Activated CD4-positive, alpha-beta T cell treated with anti-CD3 and anti-CD28 coated beads, Interleukin-2, amount 10 ng/mL, durations not matched to agents 24 days and 14 days (primary cell): ENCODE measurements at regions of chr1 and their contacts with region 1.

Region 1: DNA sequence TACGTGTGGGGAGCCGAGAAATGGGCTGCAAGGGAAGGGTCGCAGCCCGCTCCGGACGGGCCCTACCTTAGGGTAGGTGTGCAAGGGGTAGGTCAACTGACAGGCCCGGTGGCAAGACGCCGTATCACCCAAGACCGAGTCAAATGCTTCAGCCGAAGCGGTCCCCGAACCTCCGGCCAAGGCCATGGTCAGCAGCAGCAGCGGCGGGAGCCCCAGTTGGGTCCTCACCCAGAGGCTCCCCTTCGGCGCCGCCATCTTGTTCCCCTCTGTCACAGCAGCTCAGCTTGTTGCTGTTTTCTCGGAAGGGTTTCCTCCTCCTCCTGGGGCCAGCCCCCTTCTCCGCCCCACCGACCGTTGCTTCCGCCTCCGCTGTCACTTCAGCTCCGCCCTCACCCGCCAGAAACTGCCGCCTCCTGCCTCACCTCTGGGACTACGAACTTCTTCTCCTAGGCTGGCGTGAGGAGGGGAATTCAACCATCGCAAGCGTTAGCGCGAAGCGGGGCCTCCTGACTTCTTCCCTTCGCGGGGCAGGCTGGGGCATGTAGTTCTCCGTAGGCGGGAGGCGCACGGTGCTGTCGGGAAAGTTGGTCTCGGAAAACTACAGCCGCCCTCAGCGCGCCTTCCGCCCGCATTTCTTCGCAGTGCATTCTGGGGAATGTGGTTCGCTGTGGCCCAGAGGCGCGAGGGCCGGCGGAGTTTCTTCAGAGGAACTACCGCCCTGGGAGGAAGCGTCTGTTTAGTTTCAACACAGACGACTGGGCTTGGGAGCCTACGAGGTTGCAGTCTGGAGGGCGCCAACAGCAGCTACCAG is at the starts of genes TCEANC2 and TMEM59:
- DNase-seq: peak; percentile 99
- H3K4me3 Mint-ChIP-seq: no peak within 1 kb of the TSS
- H3K27ac Mint-ChIP-seq: no peak within 1 kb of the TSS
- H3K4me1 Mint-ChIP-seq: peaks cover 28% of the 10 kb centered on the region
- H3K27me3 Mint-ChIP-seq: no peaks in the 10 kb centered on the region
- total RNA-seq, gene TCEANC2: 10.0 and 11.6 TPM in 2 replicates
- total RNA-seq, gene TMEM59: 99.3 and 127 TPM in 2 replicates

Region 2: DNA sequence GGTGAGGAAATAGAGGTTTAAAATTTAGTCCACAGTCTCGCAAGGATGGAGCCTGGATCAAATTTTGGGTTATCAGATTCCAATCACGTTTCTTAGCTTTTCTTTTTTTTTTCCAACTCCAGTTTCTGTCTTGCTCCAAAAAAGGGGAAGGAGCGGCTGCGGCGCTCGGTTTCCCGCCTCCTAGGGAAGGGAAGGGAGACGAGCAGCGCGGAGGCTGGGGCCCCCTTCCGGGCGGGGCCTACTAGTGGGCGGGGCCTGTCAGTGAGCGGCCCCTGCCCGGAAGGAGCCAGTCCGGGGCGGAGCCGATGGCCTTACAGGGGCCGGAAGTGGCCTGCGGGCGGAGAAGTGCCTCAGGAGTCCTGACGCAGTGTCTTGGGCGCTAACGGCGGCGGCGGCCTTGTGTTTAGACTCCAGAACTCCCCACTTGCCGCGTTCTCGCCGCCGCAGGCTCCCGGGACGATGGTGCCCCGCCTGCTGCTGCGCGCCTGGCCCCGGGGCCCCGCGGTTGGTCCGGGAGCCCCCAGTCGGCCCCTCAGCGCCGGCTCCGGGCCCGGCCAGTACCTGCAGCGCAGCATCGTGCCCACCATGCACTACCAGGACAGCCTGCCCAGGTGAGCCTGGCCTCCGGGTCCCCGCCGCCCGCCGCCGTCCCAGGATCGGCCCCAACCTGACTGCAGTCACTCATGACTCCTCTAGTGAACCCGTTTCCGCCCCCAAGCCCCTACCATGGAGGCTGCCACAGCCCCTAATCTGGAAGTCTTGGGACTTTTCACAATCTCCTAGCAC is 856.5 kb before region 1 on chr1 and contains the start of gene CPT2:
- intact Hi-C with region 1: loop called (anchors 1 kb)
- DNase-seq: peak; percentile 98
- H3K4me3 Mint-ChIP-seq: peak within 1 kb of the TSS; percentile 88
- H3K27ac Mint-ChIP-seq: peak within 1 kb of the TSS; percentile 96
- H3K4me1 Mint-ChIP-seq: peaks cover 24% of the 10 kb centered on the region
- H3K27me3 Mint-ChIP-seq: no peaks in the 10 kb centered on the region
- total RNA-seq, gene CPT2: 19.5 and 19.9 TPM in 2 replicates

Region 3: DNA sequence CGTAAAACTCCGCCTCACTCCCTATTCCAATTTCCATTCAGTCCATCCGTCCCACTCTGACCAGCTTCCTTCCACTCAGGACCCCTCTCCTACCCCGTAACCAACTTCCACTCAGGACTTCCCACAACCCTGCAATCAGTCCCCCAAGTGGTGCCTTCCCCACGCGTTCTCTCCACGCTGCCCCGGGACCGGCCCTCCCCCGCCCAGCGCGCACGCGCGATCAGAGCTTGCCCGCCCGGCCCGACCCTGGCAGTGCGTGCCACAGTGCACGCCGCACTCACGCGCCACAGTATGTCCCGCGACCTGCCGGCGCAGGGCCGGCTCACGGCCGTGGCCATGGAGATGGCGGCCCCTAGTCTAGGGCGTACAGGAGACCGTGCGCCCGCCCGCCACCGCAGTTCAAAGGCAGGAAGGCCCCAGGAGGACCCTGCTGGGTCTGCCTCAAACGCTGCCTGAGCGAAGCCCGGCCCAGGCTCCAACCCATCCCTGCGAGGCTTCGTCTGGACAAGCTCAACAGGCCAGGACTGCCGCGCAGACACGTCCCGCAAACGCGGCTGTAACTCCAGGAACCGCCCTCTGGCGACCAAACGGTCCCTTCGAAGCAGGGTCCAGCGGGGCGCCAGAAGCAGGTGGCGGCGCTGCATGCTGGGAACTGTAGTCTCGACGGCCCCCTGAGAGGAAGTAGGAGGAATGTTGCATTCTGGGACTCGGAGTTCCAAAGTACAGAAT is 215.1 kb before region 1 on chr1 and contains the start of gene NDC1:
- intact Hi-C with region 1: loop called (anchors 1 kb)
- DNase-seq: peak; percentile 96
- H3K4me3 Mint-ChIP-seq: peak within 1 kb of the TSS; percentile 100
- H3K27ac Mint-ChIP-seq: peak within 1 kb of the TSS; percentile 100
- H3K4me1 Mint-ChIP-seq: peaks cover 25% of the 10 kb centered on the region
- H3K27me3 Mint-ChIP-seq: no peaks in the 10 kb centered on the region
- total RNA-seq, gene NDC1: 39.7 and 40.8 TPM in 2 replicates

Region 4: DNA sequence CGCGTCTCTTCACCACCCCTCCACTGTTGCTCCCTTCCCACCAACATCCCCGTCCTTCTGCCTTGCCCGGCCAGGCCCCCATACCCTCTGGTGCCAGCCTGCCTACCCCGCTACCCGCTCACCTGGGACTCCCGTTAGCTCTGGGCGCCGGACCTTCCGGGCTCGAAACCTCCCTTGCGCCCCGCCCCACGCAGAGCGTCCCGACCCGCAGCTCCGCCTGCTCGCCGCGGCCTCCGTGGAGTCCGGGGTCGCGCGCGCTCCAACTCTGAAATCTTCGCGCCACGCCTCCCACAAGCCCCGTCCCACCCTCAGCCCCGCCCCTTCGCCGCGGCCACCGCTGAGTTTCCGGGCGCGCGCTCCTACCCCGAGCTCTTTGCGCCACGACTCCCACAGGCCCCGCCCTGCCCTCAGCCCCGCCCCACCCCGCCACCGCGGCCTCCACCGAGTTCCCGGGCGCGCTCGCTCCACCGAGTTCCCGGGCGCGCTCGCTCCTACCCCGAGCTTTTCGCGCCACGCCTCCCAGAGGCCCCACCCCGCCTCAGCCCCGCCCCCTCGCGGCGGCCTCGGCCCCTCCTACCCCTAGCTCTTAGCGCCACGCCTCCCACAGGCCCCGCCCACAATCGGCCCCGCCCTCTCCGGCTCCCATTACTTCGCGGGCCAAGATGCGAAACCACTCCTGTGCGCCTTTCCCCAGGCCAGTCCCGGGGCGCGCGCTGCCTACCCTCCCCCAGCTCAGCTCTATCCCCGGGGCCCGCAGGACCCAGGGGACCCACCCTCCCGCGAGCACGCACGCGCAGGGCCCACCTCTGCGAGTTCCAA is 107.5 kb before region 1 on chr1 and contains the start of gene IFT25:
- intact Hi-C with region 1: loop called (anchors 1 kb)
- DNase-seq: peak; percentile 99
- H3K4me3 Mint-ChIP-seq: peak within 1 kb of the TSS; percentile 98
- H3K27ac Mint-ChIP-seq: peak within 1 kb of the TSS; percentile 95
- H3K4me1 Mint-ChIP-seq: peaks cover 53% of the 10 kb centered on the region
- H3K27me3 Mint-ChIP-seq: no peaks in the 10 kb centered on the region
- total RNA-seq, gene IFT25: 53.9 and 55.8 TPM in 2 replicates

Region 5: GRCh38 chr1:54028306-54029251 is 24.6 kb before region 1 on chr1:
- intact Hi-C with region 1: no loop called
- DNase-seq: peak; percentile 46
- H3K4me3 Mint-ChIP-seq: no peak overlapping the region
- H3K27ac Mint-ChIP-seq: no peak overlapping the region
- H3K4me1 Mint-ChIP-seq: no peaks in the 10 kb centered on the region
- H3K27me3 Mint-ChIP-seq: no peaks in the 10 kb centered on the region

Region 6: DNA sequence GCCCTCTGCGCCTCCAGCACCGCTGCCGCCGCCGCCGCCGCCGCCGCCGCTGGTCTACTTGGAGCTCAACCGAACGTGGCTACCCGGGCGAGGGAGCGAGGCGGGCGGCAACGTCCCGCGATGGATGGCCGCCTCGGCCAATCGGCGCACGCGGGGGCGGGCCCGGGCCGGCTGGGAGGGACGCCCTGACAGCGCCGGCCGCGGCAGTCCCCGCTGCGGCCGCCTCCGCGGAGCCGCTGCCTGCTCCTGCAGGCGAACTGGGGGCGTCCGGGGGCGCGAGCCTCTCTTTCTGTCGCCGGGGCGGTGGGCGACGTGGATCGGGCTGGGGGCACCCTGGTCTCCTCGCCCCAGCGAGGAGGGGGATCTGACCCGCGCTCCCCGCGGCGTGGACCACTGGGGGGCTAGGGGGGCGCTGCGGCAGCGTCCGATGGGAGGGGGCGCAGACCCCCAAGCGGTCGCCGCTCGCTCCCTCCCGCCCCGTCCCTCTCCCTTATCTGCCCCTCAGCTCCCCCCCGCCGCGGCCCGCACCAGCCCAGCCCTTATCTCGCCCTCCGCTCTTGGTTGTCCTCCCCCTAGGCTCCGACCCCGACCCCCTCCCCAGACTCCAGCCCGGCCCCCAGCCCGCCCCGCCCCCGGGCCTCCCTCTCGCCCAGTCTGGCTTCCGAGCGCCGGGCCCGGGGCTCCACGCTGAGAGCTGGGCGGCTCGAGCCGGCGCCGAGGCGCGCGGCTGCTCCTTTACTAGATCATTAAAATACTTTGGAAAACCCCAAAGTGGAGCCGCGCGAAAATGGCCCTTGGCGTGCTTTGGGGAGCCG is 353.4 kb after region 1 on chr1 and contains the start of gene SSBP3:
- intact Hi-C with region 1: loop called (anchors 1 kb)
- DNase-seq: peak; percentile 98
- H3K4me3 Mint-ChIP-seq: peak within 1 kb of the TSS; percentile 93
- H3K27ac Mint-ChIP-seq: peak within 1 kb of the TSS; percentile 96
- H3K4me1 Mint-ChIP-seq: peaks cover 64% of the 10 kb centered on the region
- H3K27me3 Mint-ChIP-seq: no peaks in the 10 kb centered on the region
- total RNA-seq, gene SSBP3: 84.1 and 87.9 TPM in 2 replicates

Region 7: DNA sequence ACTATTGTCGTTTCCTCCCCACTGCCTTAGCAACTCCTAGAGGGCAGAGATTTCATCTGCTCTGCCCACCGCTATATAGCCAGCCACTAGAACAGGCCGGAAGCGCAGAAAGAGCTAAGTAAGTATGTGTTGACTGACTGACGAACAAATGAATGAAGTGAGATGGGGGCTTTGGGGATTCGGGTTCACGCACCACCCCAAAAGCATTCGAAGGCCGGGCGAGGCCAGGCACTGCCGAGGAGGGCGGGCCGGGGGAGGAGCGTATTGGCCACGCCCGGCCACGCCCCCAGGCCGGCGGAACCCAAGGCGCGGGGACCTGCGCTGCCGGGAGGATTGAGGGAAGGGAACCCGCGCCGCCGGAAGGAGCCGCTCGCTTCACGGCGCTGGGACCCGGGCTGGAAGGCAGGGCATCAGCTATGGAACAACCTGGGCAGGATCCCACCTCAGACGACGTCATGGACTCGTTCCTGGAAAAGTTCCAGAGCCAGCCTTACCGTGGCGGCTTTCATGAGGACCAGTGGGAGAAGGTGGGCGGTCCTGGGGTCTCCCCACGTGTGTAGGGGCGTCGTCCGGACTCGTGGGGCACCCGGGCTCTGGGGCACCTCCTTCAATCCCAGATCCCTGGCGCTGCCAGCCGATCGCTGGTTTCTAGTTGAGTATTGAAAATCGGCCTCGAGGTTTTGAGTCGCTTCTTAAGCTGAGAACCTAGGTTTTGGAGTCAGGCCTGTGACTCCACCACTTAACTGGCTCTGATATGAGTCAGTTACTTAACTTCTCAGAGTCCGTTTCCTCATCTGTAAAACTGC is 662.6 kb after region 1 on chr1 and contains the start of gene TTC4:
- intact Hi-C with region 1: loop called (anchors 1 kb)
- DNase-seq: peak; percentile 96
- H3K4me3 Mint-ChIP-seq: peak within 1 kb of the TSS; percentile 96
- H3K27ac Mint-ChIP-seq: peak within 1 kb of the TSS; percentile 93
- H3K4me1 Mint-ChIP-seq: peaks cover 23% of the 10 kb centered on the region
- H3K27me3 Mint-ChIP-seq: peaks cover 5% of the 10 kb centered on the region
- total RNA-seq, gene TTC4: 41.6 and 45.3 TPM in 2 replicates

Region 8: GRCh38 chr1:54800899-54801759 is 748.0 kb after region 1 on chr1 and contains the start of gene TTC22:
- intact Hi-C with region 1: loop called (anchors 1 kb)
- DNase-seq: peak; percentile 91
- H3K4me3 Mint-ChIP-seq: peak within 1 kb of the TSS; percentile 87
- H3K27ac Mint-ChIP-seq: peak within 1 kb of the TSS; percentile 81
- H3K4me1 Mint-ChIP-seq: peaks cover 54% of the 10 kb centered on the region
- H3K27me3 Mint-ChIP-seq: no peaks in the 10 kb centered on the region
- total RNA-seq, gene TTC22: 1.6 TPM in 2 replicates